ENCODE measurements at regions of chr3 and their contacts with region 1.

Region 1: GRCh38 chr3:100708967-100709841 is at the start of gene TFG:
- DNase-seq: peak; percentile 98
- ATAC-seq: peak; percentile 92
- H3K4me3 ChIP-seq: peak within 1 kb of the TSS; percentile 78
- H3K27ac ChIP-seq: peak within 1 kb of the TSS; percentile 91
- H3K4me1 ChIP-seq: peaks cover 9% of the 10 kb centered on the region
- H3K27me3 ChIP-seq: no peaks in the 10 kb centered on the region
- CTCF ChIP-seq: no peak
- EP300 ChIP-seq: no peak
- POLR2A ChIP-seq: peak; percentile 89
- RAD21 ChIP-seq: no peak
- polyA plus RNA-seq, gene TFG: 29.3 to 47.6 TPM

Region 2: DNA sequence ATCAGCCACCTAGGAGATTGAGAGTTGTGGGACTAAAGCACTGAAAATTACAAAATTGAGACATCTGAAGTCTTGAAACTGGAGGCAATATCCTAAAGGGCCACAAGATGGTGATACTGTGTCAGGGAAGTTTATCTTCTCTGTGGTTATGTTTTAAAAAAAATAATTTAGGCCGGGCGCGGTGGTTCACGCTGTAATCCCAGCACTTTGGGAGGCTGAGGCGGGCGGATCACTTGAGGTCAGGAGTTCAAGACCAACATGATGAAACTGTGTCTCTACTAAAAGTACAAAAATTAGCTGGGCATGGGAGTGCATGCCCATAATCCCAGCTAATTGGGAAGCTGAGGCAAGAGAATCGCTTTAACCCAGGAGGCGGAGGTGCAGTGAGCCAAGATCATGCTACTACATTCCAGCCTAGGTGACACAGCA is 392.5 kb before region 1 on chr3:
- CTCF ChIA-PET with region 1: no interaction called
- POLR2A ChIA-PET with region 1: no interaction called
- RAD21 ChIA-PET with region 1: no interaction called
- SMC1A ChIA-PET with region 1: no interaction called
- in situ Hi-C with region 1: no loop called
- intact Hi-C with region 1: loop called (anchors 10 kb)
- DNase-seq: no peak
- ATAC-seq: peak; percentile 80
- H3K4me3 ChIP-seq: no peak overlapping the region
- H3K27ac ChIP-seq: no peak overlapping the region
- H3K4me1 ChIP-seq: peaks cover 3% of the 10 kb centered on the region; the same call in 1 of the 2 replicates
- H3K27me3 ChIP-seq: no peaks in the 10 kb centered on the region
- CTCF ChIP-seq: peak; percentile 66 to 67 (median 67)
- EP300 ChIP-seq: no peak
- POLR2A ChIP-seq: no peak
- RAD21 ChIP-seq: peak; percentile 81

Region 3: DNA sequence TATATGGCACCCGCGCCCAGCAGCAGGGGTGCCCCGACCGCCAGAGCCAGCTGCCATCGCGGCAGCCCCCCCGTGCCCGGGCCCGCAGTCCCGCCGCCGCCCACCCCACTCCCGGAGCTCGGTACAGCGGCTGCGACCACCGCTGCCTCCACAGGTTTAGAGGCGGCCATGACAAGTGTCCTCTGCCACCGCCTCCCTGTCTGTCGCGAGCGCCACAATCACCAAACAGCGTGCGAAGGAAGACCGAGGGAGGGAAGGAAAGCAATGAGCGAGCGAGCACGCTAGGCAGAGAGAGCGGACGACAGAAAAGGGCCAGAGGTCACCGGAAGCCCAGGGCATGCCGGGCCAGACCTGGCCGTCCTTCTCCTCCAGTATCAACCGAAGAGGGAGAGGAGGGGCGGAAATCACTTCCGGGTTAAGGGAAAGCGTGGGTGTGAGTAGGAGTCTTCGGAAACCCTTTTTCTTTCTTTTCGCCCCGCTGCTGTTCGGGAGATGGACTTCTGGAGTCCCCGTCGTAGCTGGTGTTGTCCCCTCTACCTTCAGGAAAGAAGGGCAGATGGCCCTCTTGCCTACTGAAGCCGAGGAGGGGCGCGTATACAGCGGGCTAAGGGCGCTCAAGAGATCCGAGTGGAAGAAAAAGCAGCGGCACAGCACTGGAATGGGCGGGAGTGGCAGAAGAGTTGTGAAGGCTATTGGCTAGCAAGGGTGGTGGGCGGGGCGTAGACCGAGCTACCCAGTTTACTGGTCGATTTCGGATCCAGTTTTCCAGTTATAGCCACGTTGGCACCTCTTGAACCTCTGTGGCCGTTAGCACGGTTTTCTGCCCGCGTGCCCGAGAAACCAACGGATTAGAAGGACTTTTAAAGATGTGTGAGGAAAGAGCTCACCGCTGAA is 308.2 kb before region 1 on chr3 and contains the starts of genes LNP1 and TOMM70:
- CTCF ChIA-PET with region 1: no interaction called
- POLR2A ChIA-PET with region 1: interaction called, 3 read pairs
- RAD21 ChIA-PET with region 1: no interaction called
- SMC1A ChIA-PET with region 1: interaction called, 4 read pairs
- in situ Hi-C with region 1: no loop called
- intact Hi-C with region 1: loop called (anchors 2 kb)
- DNase-seq: peak; percentile 85
- ATAC-seq: peak; percentile 90
- H3K4me3 ChIP-seq: peak within 1 kb of the TSS; percentile 73
- H3K27ac ChIP-seq: peak within 1 kb of the TSS; percentile 99
- H3K4me1 ChIP-seq: no peaks in the 10 kb centered on the region
- H3K27me3 ChIP-seq: no peaks in the 10 kb centered on the region
- CTCF ChIP-seq: no peak
- EP300 ChIP-seq: no peak
- POLR2A ChIP-seq: peak; percentile 86
- RAD21 ChIP-seq: no peak
- polyA plus RNA-seq, gene LNP1: 2.1 to 2.5 TPM
- polyA plus RNA-seq, gene TOMM70: 12.7 to 22.6 TPM

Region 4: GRCh38 chr3:100641471-100642032 is 67.7 kb before region 1 on chr3:
- CTCF ChIA-PET with region 1: interaction called, 6 read pairs
- POLR2A ChIA-PET with region 1: interaction called, 6 read pairs
- RAD21 ChIA-PET with region 1: interaction called, 3 read pairs
- SMC1A ChIA-PET with region 1: interaction called, 10 read pairs
- in situ Hi-C with region 1: no loop called
- intact Hi-C with region 1: loop called (anchors 2 kb)
- DNase-seq: peak; percentile 24
- ATAC-seq: peak; percentile 91
- H3K4me3 ChIP-seq: no peak overlapping the region
- H3K27ac ChIP-seq: no peak overlapping the region
- H3K4me1 ChIP-seq: no peaks in the 10 kb centered on the region
- H3K27me3 ChIP-seq: no peaks in the 10 kb centered on the region
- CTCF ChIP-seq: no peak
- EP300 ChIP-seq: peak; percentile 59 to 64; a peak in 2 of 4 replicates
- POLR2A ChIP-seq: no peak
- RAD21 ChIP-seq: no peak

Region 5: GRCh38 chr3:100650651-100651611 is 58.3 kb before region 1 on chr3:
- CTCF ChIA-PET with region 1: interaction called, 5 read pairs
- POLR2A ChIA-PET with region 1: no interaction called
- RAD21 ChIA-PET with region 1: interaction called, 6 read pairs
- SMC1A ChIA-PET with region 1: interaction called, 17 read pairs
- in situ Hi-C with region 1: no loop called
- intact Hi-C with region 1: loop called (anchors 2 kb)
- DNase-seq: peak; percentile 69
- ATAC-seq: peak; percentile 99
- H3K4me3 ChIP-seq: peak overlapping the region; percentile 30; the same call in 1 of the 2 replicates
- H3K27ac ChIP-seq: peak overlapping the region; percentile 46
- H3K4me1 ChIP-seq: no peaks in the 10 kb centered on the region; the same call in 1 of the 2 replicates
- H3K27me3 ChIP-seq: no peaks in the 10 kb centered on the region
- CTCF ChIP-seq: peak; percentile 37 to 66 (median 38); a peak in 4 of 6 replicates
- EP300 ChIP-seq: peak in 1 of 2 experiments; percentile 22; a peak in 1 of 4 replicates
- POLR2A ChIP-seq: no peak
- RAD21 ChIP-seq: peak; percentile 52

Region 6: DNA sequence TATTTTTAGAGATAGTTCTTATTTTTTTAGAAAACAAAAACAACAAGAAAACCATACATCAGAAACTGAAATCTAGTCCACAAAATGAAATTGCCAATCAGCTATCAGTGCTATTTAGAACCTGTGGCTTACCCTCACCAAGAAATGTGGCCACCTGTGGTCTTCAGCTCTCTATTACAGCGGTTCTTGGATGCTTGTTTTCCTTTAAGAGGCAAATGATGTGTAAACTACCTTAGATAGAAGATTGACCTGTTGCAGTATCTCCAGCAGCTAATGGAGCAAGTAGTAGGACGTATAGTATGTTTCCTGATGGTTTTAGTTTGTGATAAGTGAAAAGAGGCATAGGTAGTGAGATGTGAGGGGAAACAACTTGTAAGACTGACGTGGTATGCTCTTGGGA is 21.3 kb after region 1 on chr3:
- CTCF ChIA-PET with region 1: interaction called, 11 read pairs
- POLR2A ChIA-PET with region 1: interaction called, 7 read pairs
- RAD21 ChIA-PET with region 1: interaction called, 6 read pairs
- SMC1A ChIA-PET with region 1: interaction called, 34 read pairs
- in situ Hi-C with region 1: no loop called
- intact Hi-C with region 1: no loop called
- DNase-seq: peak; percentile 9
- ATAC-seq: peak; percentile 53
- H3K4me3 ChIP-seq: no peak overlapping the region
- H3K27ac ChIP-seq: no peak overlapping the region
- H3K4me1 ChIP-seq: no peaks in the 10 kb centered on the region; the same call in 1 of the 2 replicates
- H3K27me3 ChIP-seq: no peaks in the 10 kb centered on the region
- CTCF ChIP-seq: no peak
- EP300 ChIP-seq: no peak
- POLR2A ChIP-seq: no peak
- RAD21 ChIP-seq: no peak

Region 7: GRCh38 chr3:100803711-100804110 is 94.5 kb after region 1 on chr3:
- CTCF ChIA-PET with region 1: no interaction called
- POLR2A ChIA-PET with region 1: no interaction called
- RAD21 ChIA-PET with region 1: no interaction called
- SMC1A ChIA-PET with region 1: no interaction called
- in situ Hi-C with region 1: no loop called
- intact Hi-C with region 1: no loop called
- DNase-seq: no peak
- ATAC-seq: no peak
- H3K4me3 ChIP-seq: no peak overlapping the region
- H3K27ac ChIP-seq: no peak overlapping the region
- H3K4me1 ChIP-seq: no peaks in the 10 kb centered on the region
- H3K27me3 ChIP-seq: no peaks in the 10 kb centered on the region
- CTCF ChIP-seq: no peak
- EP300 ChIP-seq: no peak
- POLR2A ChIP-seq: no peak
- RAD21 ChIP-seq: no peak